ENCODE measurements at regions of chr17 and their contacts with region 1.

Region 1: GRCh38 chr17:20103454-20104446 is 94.6 kb downstream of the SPECC1 start:
- DNase-seq: no peak
- H3K4me3 ChIP-seq: no peak overlapping the region
- CTCF ChIP-seq: no peak

Region 2: DNA sequence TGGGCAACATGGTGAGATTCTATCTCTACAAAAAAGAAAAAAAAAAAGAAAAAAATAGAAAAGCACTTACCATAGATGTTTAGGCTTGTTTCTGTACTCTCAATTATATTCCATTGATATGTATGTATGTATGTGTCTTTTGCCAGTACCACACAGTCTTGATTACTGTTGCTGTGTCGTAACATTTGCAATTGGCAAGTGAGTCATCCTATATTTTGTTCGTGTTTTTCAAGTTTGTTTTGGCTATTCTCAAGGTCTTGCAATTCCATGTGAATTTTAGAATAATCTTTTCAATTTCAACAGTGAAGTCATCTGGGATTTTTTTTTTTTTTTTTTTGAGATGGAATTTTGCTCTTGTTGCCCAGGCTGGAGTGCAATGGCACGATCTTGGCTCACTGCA is 75.3 kb before region 1 on chr17:
- in situ Hi-C with region 1: no loop called
- DNase-seq: no peak
- H3K4me3 ChIP-seq: no peak overlapping the region
- CTCF ChIP-seq: no peak

Region 3: DNA sequence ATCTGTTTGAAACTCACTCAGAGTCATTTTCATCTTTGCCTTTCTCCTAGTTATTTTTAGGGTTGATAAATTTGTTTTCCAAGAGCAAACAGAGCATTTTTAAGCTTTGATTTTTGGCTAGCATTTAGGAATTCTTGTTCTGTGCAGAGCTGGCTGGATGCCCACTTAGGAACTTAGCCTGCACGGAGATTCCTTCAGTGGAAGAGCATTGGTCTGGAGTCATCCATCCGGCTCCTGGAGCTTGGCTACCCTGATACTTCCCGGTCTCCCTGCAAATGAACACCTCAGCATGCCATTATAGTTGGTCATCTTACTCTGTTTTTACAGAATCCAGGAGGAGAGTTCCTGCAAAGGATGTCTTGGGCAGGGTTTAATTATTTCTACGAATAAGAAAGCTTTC is 37.5 kb before region 1 on chr17:
- in situ Hi-C with region 1: loop called (anchors 5 kb)
- DNase-seq: peak; percentile 90
- H3K4me3 ChIP-seq: no peak overlapping the region
- CTCF ChIP-seq: no peak

Region 4: DNA sequence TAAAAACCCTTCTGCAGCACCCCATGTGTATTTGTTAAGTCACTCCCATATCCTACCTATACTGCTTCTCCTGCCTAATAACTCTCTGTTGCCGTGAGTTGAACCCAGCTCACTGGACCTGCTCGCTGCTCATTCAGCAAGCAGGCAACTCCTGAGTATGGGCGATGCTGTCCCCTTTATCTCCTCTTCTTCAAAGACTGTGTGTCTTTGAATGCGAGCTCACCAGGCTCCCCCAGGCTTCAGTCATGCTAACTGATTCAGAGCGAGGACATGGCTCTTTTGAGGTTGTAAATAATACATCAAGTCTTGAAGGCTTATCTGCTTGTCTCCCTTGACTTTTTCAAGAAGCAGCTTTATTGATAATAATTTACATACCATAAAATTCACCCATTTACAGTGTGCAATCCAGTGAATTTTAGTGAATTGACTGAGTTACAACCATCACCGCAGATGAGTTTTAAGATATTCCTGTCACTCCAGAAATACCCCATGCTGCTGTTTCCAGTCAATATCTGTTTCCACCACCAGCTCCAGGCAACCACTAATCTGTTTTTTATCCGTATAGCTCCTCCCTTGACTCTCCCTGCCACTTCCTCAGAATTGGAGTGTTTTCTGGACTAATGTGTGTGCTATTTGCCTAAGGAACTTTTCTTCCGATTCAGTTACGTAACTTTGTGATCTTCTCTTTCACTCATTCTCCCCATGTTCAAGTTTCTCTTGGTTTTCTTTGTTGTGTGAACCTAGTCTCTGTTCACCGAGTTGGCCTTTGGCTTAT is 37.6 kb after region 1 on chr17:
- in situ Hi-C with region 1: no loop called
- DNase-seq: no peak
- H3K4me3 ChIP-seq: no peak overlapping the region
- CTCF ChIP-seq: no peak

Measured in astrocyte of the cerebellum (primary cell).